Adrenal gland (tissue), 19 donors: ENCODE measurements at regions of chr16 and their contacts with region 1.

Region 1: DNA sequence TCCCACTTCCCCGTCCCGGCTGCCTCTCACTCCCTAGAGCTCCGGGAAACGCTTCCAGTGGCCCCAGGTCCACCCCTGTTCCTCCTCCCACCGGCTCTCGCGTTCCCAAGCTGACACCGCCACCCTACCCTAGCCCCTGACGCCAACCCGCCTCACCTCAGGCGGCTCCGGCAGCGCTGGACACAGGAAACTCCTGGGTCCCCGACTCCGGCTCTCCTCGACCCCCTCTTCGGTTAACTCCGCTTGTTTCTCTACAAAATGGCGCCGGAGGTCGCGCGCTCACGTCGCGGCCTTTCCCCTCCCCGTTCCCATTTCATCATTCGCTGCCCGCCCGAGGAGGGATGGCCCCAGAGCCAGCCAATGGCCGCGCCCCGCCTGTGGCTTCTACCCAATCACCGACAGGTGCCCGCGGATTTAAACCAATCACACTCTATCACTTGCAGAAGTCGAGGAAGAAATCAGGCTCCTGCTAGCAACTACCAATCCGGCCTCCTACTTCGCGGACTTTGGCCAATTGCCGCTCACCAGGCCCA is at the start of gene CNOT1:
- DNase-seq: peak; percentile 98 to 100 (median 99)
- H3K4me3 ChIP-seq: peak within 1 kb of the TSS; percentile 62 to 100 (median 94)
- H3K27ac ChIP-seq: peak within 1 kb of the TSS; percentile 90 to 100 (median 99)
- H3K4me1 ChIP-seq: peaks cover 17 to 20% of the 10 kb centered on the region in 2 donors
- H3K27me3 ChIP-seq: no peaks in the 10 kb centered on the region
- CTCF ChIP-seq: no peak
- POLR2A ChIP-seq: peak; percentile 75 to 95
- total RNA-seq, gene CNOT1: 83.4 to 172 (median 162) TPM

Region 2: DNA sequence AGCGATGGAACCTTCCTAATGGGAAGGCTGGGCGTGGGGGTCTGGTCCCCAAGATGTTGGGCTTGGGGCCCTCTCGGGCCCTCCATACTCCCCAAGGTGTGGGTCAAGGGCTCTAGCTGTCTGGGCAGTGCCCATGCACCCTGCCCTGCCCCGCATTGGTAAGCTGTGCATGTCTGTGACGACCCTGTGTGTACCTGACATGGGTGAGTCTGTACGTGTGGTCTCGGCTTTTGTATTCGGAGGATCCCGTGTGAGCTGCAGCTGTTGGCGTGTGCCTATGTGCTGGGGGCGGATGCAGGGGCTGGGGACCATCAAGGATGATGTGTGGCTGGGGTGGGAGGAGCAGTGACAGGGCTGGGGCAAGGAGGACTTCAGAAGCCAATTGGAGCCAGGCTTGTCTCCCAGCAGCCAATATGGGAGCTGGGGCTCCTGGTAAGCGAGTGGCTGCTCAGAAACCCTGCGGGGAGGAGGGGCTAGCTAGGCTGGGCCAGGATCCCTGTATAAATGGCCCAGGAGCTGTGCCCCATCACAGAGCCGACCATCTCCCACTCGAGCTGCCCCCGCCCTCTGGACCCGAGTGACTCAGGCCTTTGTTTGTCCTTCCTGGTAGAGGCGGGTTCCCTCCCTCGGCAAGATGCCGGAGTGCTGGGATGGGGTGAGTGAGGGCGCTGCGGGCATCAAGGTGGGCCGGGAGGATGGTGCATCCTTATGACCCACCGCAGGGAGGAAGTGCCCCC is 129.9 kb before region 1 on chr16 and contains the start of gene NDRG4:
- intact Hi-C with region 1: loop called in 1 of 2 experiments (anchors 10 kb)
- DNase-seq: peak; percentile 69 to 93 (median 86)
- H3K4me3 ChIP-seq: peak within 1 kb of the TSS in 1 of 4 donors; percentile 19
- H3K27ac ChIP-seq: peak within 1 kb of the TSS in 2 of 5 donors; percentile 45 to 57
- H3K4me1 ChIP-seq: peaks cover 25 to 37% of the 10 kb centered on the region in 2 donors
- H3K27me3 ChIP-seq: no peaks in the 10 kb centered on the region
- CTCF ChIP-seq: no peak
- POLR2A ChIP-seq: peak; percentile 35 to 65
- total RNA-seq, gene NDRG4: 160 to 952 (median 346) TPM

Region 3: GRCh38 chr16:58515125-58515870 is 114.3 kb before region 1 on chr16 and contains the start of gene SETD6:
- intact Hi-C with region 1: loop called in 1 of 2 experiments (anchors 10 kb)
- DNase-seq: peak; percentile 87 to 96 (median 94)
- H3K4me3 ChIP-seq: peak within 1 kb of the TSS; percentile 59 to 80 (median 64)
- H3K27ac ChIP-seq: peak within 1 kb of the TSS; percentile 31 to 89 (median 82)
- H3K4me1 ChIP-seq: peaks cover 11 to 18% of the 10 kb centered on the region in 2 donors
- H3K27me3 ChIP-seq: no peaks in the 10 kb centered on the region
- CTCF ChIP-seq: peak in 5 of 6 experiments; percentile 29 to 57 (median 38)
- POLR2A ChIP-seq: peak; percentile 6 to 64
- total RNA-seq, gene SETD6: 14.4 to 53.8 (median 26.8) TPM

Region 4: DNA sequence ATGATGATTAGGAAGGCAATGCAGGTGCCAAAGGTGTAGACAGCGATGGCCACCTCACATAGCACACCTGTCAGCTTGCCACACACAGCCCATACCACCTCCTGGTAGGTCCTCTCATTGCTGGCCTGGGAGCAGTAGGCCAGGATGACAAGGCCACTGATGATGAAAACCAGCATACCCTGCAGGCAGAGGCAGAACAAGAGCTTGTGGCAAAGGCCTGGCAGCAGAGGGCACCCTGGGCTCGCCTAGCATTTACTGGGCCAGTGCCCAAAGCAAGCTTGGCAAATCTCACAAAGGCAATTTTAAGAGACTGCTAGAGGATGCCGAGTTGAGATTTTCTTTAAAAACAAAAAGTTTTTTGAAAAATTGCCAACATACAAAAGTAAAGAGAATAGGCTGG is 49.1 kb after region 1 on chr16:
- intact Hi-C with region 1: no loop called
- DNase-seq: peak; percentile 71 to 89 (median 79)
- H3K4me3 ChIP-seq: no peak overlapping the region
- H3K27ac ChIP-seq: no peak overlapping the region
- H3K4me1 ChIP-seq: peaks cover 8 to 9% of the 10 kb centered on the region in 2 donors
- H3K27me3 ChIP-seq: no peaks in the 10 kb centered on the region
- CTCF ChIP-seq: peak; percentile 14 to 64 (median 58)
- POLR2A ChIP-seq: no peak